Prostate gland (tissue), 2 donors: ENCODE measurements at regions of chr1 and their contacts with region 1.

Region 1: GRCh38 chr1:212368073-212368484 is 46.6 kb downstream of the PACC1 start:
- DNase-seq: peak; percentile 43
- H3K4me3 ChIP-seq: no peak overlapping the region
- H3K27ac ChIP-seq: no peak overlapping the region
- H3K4me1 ChIP-seq: no peaks in the 10 kb centered on the region
- H3K27me3 ChIP-seq: no peaks in the 10 kb centered on the region
- CTCF ChIP-seq: peak; percentile 42 to 74 (median 58)
- POLR2A ChIP-seq: no peak

Region 2: GRCh38 chr1:212070720-212071302 is 297.3 kb before region 1 on chr1:
- intact Hi-C with region 1: loop called (anchors 2 kb)
- DNase-seq: peak; percentile 8
- H3K4me3 ChIP-seq: no peak overlapping the region
- H3K27ac ChIP-seq: no peak overlapping the region
- H3K4me1 ChIP-seq: no peaks in the 10 kb centered on the region
- H3K27me3 ChIP-seq: no peaks in the 10 kb centered on the region
- CTCF ChIP-seq: peak; percentile 35 to 91 (median 86)
- POLR2A ChIP-seq: no peak

Region 3: DNA sequence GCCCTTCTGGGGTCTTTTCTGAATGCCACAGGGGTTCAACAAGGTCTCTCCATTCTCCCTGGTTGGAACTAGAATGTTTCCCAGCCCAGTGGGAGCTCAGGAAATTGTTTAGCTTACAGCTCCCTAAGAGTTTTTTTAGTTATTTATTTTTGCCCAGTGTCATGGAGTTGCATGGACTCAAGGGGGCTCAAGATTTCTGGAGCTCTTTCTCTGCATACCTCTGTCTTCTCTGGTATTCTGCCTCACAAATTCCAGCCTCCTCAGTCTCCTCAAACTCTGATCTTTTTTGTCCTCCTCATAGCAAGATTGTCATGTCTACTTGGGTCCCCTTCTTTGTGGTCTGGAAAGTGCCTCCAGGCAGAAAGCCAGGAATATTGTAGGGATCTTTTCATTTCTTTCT is 98.8 kb before region 1 on chr1:
- intact Hi-C with region 1: no loop called
- DNase-seq: no peak
- H3K4me3 ChIP-seq: no peak overlapping the region
- H3K27ac ChIP-seq: no peak overlapping the region
- H3K4me1 ChIP-seq: no peaks in the 10 kb centered on the region
- H3K27me3 ChIP-seq: no peaks in the 10 kb centered on the region
- CTCF ChIP-seq: no peak
- POLR2A ChIP-seq: no peak

Region 4: DNA sequence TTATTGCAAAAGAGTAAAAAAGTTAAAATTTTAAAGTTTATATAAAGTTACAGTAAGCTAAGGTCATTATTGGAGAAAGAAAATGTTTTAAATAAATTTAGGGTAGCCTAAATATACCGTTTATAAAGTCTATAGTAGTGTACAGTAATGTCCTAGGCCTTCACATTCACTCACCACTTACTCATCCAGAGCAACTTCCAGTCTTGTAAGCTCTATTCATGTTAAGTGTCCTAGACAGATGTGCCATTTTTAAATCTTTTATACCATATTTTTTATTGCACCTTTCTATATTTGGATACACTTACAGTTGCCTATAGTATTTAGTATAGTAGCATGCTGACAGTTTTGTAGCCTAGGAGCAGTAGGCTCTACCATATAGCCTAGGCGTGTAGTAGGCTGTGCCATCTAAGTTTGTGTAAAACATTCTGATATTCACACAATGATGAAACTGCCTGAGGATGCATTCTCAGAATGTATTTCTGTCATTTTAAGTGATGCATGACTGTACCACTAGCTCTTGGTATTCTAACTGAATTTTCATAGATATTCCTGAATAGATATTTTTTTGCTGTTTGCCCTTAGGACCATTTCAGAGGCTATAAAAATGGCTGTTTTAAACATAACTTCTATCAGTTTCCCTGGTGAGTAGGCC is 56.1 kb before region 1 on chr1:
- intact Hi-C with region 1: no loop called
- DNase-seq: no peak
- H3K4me3 ChIP-seq: no peak overlapping the region
- H3K27ac ChIP-seq: no peak overlapping the region
- H3K4me1 ChIP-seq: no peaks in the 10 kb centered on the region
- H3K27me3 ChIP-seq: no peaks in the 10 kb centered on the region
- CTCF ChIP-seq: no peak
- POLR2A ChIP-seq: no peak